ENCODE measurements at regions of chr15 and their contacts with region 1.

Region 1: GRCh38 chr15:60110909-60111308 is 106.8 kb downstream of the FOXB1 start:
- DNase-seq: no peak
- ATAC-seq: peak; percentile 83
- H3K4me3 Mint-ChIP-seq: no peak overlapping the region
- H3K27ac Mint-ChIP-seq: peak overlapping the region; percentile 68
- H3K4me1 Mint-ChIP-seq: peaks cover 28% of the 10 kb centered on the region
- H3K27me3 Mint-ChIP-seq: peaks cover 6% of the 10 kb centered on the region

Region 2: DNA sequence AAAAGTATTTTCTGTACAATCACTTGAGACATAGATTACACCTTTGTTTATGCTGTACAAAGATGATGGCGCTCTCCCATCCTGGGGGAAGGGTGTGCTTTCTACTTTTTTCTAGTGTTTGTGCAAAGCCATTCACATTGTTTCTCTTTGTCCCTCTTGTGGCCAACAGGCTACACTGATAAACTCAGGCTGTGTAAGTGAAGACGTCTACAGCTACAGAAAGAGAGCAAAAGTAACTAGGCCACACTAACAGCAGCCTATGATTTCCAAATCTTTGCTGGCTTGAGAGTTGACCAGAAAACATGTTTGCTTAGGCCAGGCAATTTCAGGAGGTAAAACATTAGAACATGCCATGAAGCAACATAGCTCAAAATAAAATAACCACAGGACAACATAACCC is 31.7 kb before region 1 on chr15:
- CTCF ChIA-PET with region 1: no interaction called
- POLR2A ChIA-PET with region 1: interaction called, 3 read pairs
- intact Hi-C with region 1: loop called (anchors 2 to 5 kb)
- DNase-seq: no peak
- ATAC-seq: no peak
- H3K4me3 Mint-ChIP-seq: no peak overlapping the region
- H3K27ac Mint-ChIP-seq: no peak overlapping the region
- H3K4me1 Mint-ChIP-seq: peaks cover 40% of the 10 kb centered on the region
- H3K27me3 Mint-ChIP-seq: peaks cover 8% of the 10 kb centered on the region